ENCODE measurements at regions of chr1 and their contacts with region 1.

Region 1: DNA sequence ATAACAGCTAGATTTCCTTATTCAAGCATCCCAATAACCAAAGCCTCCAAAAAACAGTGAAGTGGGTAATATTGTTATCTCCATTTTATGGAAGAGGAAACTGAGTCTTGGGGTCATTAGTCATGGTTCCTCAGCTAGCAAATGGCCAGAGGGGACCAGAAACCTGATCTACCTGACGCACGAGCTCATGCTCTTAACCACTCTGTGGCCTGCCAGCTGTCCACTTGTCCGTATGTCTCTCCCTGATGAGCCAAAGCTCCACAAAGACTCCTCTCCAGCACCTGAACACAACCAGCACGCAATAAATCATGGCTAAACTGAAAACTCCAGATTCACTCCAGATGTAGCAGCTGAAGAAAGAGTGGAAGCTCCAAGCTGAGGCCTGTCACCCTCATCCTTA is 5.8 kb downstream of the CAPN8 start:
- DNase-seq: no peak
- ATAC-seq: no peak
- H3K4me3 ChIP-seq: no peak overlapping the region
- H3K27ac ChIP-seq: no peak overlapping the region
- H3K4me1 ChIP-seq: peaks cover 9% of the 10 kb centered on the region
- H3K27me3 ChIP-seq: no peaks in the 10 kb centered on the region
- CTCF ChIP-seq: no peak

Region 2: GRCh38 chr1:223298701-223299100 is 361.0 kb before region 1 on chr1:
- CTCF ChIA-PET with region 1: no interaction called
- POLR2A ChIA-PET with region 1: no interaction called
- in situ Hi-C with region 1: no loop called
- intact Hi-C with region 1: no loop called
- DNase-seq: no peak
- ATAC-seq: no peak
- H3K4me3 ChIP-seq: no peak overlapping the region
- H3K27ac ChIP-seq: no peak overlapping the region
- H3K4me1 ChIP-seq: no peaks in the 10 kb centered on the region
- H3K27me3 ChIP-seq: no peaks in the 10 kb centered on the region
- CTCF ChIP-seq: no peak

Region 3: GRCh38 chr1:223639331-223639749 is 20.4 kb before region 1 on chr1:
- CTCF ChIA-PET with region 1: no interaction called
- POLR2A ChIA-PET with region 1: no interaction called
- in situ Hi-C with region 1: no loop called
- intact Hi-C with region 1: loop called (anchors 2 kb)
- DNase-seq: no peak
- ATAC-seq: no peak
- H3K4me3 ChIP-seq: no peak overlapping the region
- H3K27ac ChIP-seq: no peak overlapping the region
- H3K4me1 ChIP-seq: no peaks in the 10 kb centered on the region
- H3K27me3 ChIP-seq: no peaks in the 10 kb centered on the region
- CTCF ChIP-seq: no peak